AG04450 (cell line): ENCODE measurements at regions of chr17 and their contacts with region 1.

Region 1: GRCh38 chr17:2244545-2245525 is 58.8 kb downstream of the SMG6 start:
- DNase-seq: peak; percentile 77
- H3K4me3 ChIP-seq: peak overlapping the region; percentile 21; the same call in 1 of the 2 replicates
- H3K27ac ChIP-seq: peak overlapping the region; percentile 98
- H3K27me3 ChIP-seq: no peaks in the 10 kb centered on the region
- CTCF ChIP-seq: peak; percentile 99

Region 2: DNA sequence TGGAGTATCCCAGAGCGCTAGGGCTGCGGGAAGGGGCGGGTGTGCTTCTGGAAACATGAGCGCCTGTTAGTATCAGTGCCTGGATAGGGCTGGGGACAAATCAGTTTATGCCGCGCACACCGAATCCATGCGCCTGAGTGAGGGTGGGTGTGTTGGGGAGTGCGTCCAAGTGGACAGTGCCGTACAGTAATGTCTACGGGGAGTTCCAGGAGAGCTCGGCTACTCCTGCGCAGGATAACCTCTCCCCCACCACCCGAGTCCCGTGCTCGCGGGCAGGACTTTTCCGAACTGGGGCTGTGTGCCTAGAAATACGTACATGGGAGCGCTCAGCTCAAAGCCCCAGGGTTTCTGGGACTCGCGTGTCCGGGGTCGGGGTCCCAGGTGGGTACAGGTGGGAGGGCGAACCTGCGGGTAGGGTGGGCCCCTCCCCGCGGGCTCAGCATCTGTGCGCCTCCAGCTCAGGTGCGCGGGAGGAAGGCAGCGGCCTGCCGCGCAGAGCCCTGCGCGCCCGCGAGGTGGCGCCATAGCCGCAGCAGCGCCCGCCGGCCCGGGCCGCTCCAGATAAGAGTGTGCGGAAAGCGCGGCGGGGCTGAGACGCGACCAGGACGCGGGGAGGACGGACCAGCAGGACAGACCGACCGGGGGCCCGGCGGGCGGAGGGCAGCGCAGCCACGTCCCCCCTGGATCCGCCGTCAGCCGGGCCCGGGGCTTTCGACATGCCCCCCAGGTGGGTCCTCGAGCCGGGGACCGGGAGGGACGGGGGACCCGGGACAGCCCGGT is 190.1 kb before region 1 on chr17 and contains the start of gene HIC1:
- CTCF ChIA-PET with region 1: interaction called, 87 read pairs
- POLR2A ChIA-PET with region 1: interaction called, 38 read pairs
- DNase-seq: no peak
- H3K4me3 ChIP-seq: peak within 1 kb of the TSS; percentile 72
- H3K27ac ChIP-seq: peak within 1 kb of the TSS; percentile 47
- H3K27me3 ChIP-seq: peaks cover 4% of the 10 kb centered on the region
- CTCF ChIP-seq: peak; percentile 72
- polyA plus RNA-seq, gene HIC1: 12.7 and 14.4 TPM in 2 replicates

Region 3: GRCh38 chr17:2094891-2095535 is 149.8 kb before region 1 on chr17:
- CTCF ChIA-PET with region 1: interaction called, 26 read pairs
- POLR2A ChIA-PET with region 1: interaction called, 3 read pairs
- DNase-seq: no peak
- H3K4me3 ChIP-seq: no peak overlapping the region
- H3K27ac ChIP-seq: peak overlapping the region; percentile 21
- H3K27me3 ChIP-seq: no peaks in the 10 kb centered on the region
- CTCF ChIP-seq: peak; percentile 92

Region 4: DNA sequence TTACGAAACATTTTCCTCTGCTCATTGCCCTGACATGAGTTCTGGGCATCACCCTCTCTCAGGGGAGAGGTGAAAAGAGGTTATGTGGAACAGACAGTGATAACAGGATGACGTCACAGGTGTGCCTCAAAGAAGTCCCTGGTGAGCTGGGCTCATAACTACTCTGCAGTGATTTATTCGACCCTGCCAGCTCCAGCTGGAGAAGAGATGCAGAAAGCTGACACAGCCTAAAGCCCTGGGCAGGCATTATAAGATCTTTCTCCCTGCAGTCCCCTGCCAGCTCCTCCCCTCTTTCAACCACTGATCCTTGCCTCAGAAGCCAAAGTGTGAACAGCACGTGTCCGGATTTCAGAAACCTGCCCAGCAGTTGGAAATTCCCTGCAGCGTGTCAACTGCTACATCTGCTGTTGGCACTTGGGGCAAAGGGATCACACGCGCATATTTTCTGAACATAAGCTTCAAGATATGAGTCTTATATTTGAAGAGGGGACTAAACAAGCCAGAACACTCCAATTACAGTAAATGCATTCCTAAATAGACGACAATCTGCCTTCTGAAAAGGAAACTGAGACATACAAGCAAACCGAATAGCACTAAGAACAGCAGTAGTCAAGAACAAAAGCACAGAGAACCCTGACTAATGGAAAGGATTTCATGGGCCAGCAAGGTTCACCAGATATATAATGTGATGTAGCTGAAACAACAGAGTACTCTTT is 21.8 kb before region 1 on chr17:
- CTCF ChIA-PET with region 1: interaction called, 13 read pairs
- POLR2A ChIA-PET with region 1: no interaction called
- DNase-seq: no peak
- H3K4me3 ChIP-seq: no peak overlapping the region
- H3K27ac ChIP-seq: peak overlapping the region; percentile 40
- H3K27me3 ChIP-seq: no peaks in the 10 kb centered on the region
- CTCF ChIP-seq: no peak

Region 5: DNA sequence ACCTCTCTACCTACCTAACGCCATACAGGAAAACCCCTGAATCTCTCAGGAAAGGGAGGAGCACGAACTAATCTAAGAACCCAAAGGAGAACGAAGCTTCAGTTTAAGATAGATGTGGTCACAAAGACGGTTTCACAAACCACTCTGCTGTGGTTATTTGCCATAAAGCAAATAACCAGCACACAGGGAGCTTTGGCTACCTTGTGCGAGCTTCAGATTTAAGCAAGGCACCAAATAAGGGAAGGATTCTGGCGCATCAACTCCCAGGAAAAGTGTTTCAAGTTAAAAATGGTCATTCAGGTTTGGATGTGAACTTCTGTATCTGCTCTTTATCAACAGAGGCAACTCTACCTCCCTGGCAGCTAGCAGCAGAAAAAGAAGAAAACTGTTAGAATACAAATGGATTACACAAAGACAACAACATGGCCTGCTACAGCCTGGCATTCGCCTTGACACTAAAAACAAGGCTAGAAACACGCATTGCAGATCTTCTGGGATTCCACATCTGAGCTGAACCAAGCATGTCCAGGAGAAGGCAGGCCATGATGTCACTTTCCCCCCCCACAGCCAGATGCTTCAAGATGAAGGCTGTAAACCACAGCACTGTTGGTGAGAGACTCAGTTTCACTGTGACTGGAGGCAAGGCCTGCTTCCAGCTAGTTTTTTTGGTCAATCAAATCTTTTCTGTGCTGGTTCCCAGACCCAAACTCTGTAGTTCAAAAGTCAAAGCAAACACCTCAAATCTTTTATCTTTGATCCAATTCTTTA is 15.1 kb after region 1 on chr17:
- CTCF ChIA-PET with region 1: interaction called, 13 read pairs
- POLR2A ChIA-PET with region 1: no interaction called
- DNase-seq: no peak
- H3K4me3 ChIP-seq: no peak overlapping the region
- H3K27ac ChIP-seq: no peak overlapping the region
- H3K27me3 ChIP-seq: no peaks in the 10 kb centered on the region
- CTCF ChIP-seq: no peak